Dendritic cell treated with granulocyte-macrophage colony-stimulating factor and Interleukin-4, amounts not matched to agents 40 ng/mL and 50 ng/mL, for 4 days (primary cell): ENCODE measurements at regions of chr20 and their contacts with region 1.

Region 1: DNA sequence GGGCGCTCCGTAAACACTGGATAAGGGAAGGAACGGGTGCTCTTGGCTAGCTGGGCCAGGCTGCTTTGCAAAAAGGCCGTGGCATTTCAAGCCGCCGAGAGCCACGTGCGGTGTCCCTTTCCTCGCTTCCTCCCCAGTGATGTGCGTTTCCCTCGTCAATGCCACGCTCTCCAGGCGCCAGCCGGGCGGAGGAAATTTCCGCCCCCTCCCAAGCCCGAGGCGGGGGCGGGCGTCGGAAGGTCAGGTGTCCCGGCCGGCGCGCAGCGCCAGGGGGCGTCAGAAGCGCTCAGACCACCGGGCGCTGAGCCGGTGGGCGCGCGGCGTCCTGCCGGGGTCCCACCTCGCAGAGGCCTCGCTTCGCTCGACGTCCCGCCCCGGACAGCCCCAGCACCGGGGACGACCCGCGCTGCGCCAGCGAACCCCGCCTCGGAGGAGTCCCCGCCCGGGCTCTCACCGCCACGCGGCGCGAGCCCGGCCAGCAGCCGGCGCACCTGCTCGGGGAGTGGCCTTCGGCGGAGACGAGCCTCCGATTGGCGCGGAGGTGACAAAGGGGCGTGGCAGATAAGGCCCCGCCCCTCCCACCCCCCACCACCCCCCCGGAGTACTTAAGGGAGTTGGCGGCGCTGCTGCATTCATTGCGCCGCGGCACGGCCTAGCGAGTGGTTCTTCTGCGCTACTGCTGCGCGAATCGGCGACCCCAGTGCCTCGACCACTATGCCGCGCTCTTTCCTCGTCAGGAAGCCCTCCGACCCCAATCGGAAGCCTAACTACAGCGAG is at the start of gene SNAI1:
- H3K4me3 Mint-ChIP-seq: peak within 1 kb of the TSS; percentile 58
- H3K27ac Mint-ChIP-seq: peak within 1 kb of the TSS; percentile 47
- H3K4me1 Mint-ChIP-seq: peaks cover 35% of the 10 kb centered on the region
- H3K27me3 Mint-ChIP-seq: peaks cover 40% of the 10 kb centered on the region

Region 2: GRCh38 chr20:50070991-50071888 is 88.7 kb after region 1 on chr20:
- intact Hi-C with region 1: loop called (anchors 1 kb)
- H3K4me3 Mint-ChIP-seq: peak overlapping the region; percentile 69
- H3K27ac Mint-ChIP-seq: no peak overlapping the region
- H3K4me1 Mint-ChIP-seq: peaks cover 10% of the 10 kb centered on the region
- H3K27me3 Mint-ChIP-seq: peaks cover 20% of the 10 kb centered on the region

Region 3: DNA sequence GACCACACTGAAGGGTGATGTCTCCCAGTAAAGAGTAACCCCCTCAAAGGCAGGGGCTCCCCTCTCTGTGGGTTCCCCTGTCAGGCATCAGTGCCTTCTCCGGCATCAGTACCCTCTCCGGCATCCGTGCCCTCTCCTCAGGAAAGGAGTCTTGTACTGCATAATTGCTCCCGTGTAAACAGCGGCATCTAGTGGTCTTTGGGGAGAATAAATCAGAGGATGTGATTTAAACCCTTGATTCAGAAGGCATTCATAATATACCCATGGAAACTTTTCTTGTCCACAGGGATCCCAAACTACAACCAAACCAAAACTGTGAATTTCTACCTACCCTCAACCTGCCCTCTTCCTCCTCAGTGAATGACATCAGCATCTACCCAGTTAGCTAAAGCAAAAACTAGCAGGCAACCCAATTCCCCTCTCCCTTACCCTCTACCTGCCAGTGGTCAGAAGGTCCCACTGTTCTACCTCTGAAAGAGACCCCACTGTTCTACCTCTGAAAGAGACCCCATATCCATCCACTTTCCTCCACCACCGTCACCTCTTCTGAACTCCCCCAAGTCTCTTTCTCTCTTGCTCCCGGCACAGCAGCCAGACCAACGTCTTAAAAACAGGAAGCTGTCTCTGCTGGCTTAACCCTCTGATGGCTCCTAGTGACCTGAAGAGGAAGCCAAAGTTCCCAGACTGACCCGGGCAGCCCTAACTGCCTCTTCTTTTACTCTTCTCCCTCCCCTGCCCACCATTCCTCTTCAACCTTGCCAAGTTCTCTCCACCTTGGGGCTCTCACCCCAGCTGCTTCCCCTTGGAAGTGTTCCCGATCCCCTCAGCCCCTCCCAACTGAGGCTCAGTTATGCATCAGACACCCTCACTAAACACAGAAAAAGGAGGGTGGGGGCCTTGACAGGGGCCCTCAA is 103.2 kb after region 1 on chr20:
- intact Hi-C with region 1: loop called (anchors 5 kb)
- H3K4me3 Mint-ChIP-seq: peak overlapping the region; percentile 76
- H3K27ac Mint-ChIP-seq: peak overlapping the region; percentile 79
- H3K4me1 Mint-ChIP-seq: peaks cover 29% of the 10 kb centered on the region
- H3K27me3 Mint-ChIP-seq: no peaks in the 10 kb centered on the region

Region 4: DNA sequence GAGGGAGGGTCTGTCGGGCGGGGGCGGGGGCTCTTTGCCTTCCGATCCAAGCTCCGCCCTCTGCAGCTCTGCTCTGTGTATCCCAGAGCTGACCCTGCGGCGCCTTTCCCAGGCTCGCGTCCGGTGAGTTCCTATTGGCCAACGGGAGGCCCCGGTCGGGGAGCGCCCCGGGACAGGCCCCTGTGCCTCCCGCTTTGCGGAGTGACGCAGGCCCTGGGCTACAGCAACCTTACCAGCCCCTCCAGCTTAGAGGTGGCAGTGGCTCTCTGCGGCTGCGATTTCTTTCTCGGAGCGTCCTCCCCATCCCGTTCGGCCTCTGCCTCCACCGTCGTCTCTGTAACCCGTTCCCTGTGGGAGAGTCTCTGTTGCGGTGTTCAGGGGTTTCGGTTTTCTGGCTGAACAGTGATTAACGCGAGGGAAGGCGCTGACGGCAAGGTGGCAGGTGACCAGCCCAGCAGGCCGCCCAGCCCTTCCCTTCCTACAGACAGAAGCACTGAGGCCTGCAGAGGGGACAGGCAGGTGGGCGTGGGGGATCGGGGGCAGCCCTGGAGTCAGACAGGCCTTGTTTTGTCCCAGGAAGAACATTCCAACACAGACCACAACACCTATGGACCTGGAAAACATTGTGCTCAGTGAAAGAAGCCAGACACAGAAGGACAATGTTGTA is 189.9 kb after region 1 on chr20:
- intact Hi-C with region 1: loop called (anchors 5 kb)
- H3K4me3 Mint-ChIP-seq: peak overlapping the region; percentile 67
- H3K27ac Mint-ChIP-seq: no peak overlapping the region
- H3K4me1 Mint-ChIP-seq: peaks cover 21% of the 10 kb centered on the region
- H3K27me3 Mint-ChIP-seq: peaks cover 27% of the 10 kb centered on the region